ENCODE measurements at regions of chr11 and their contacts with region 1.

Region 1: DNA sequence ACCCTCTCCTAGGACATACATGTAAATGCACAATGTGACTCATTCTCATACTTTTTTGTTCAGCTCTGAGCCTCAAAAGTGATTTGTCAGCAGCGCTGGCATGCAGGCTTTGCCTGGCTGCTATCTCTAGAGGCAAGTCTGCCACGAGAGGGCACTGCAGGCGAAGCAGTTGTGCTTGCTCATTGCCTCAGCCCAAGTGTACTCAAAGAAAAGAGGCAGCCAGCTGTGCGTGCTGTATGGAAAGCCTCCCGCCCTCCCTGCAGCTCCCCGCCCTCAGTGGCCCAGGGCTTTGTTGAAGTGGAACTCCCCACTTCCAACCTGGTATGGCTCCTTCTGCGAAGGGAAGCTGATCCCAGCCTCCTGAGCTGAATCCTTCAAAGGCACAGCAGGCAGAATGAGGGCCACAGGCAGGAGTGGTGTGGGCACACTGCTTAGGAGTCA is 16.3 kb downstream of the SDHAF2 start:
- DNase-seq: peak; percentile 95
- ATAC-seq: peak; percentile 93
- H3K4me3 Mint-ChIP-seq: no peak overlapping the region
- H3K27ac Mint-ChIP-seq: peak overlapping the region; percentile 82; the same call in 1 of the 2 replicates
- H3K4me1 Mint-ChIP-seq: no peaks in the 10 kb centered on the region
- H3K27me3 Mint-ChIP-seq: no peaks in the 10 kb centered on the region
- CTCF ChIP-seq: peak; percentile 47

Region 2: GRCh38 chr11:61028272-61028761 is 417.9 kb before region 1 on chr11:
- CTCF ChIA-PET with region 1: no interaction called
- POLR2A ChIA-PET with region 1: no interaction called
- DNase-seq: no peak
- ATAC-seq: no peak
- H3K4me3 Mint-ChIP-seq: no peak overlapping the region
- H3K27ac Mint-ChIP-seq: no peak overlapping the region
- H3K4me1 Mint-ChIP-seq: peaks cover 16% of the 10 kb centered on the region
- H3K27me3 Mint-ChIP-seq: peaks cover 13% of the 10 kb centered on the region; the same call in 1 of the 2 replicates
- CTCF ChIP-seq: no peak

Region 3: DNA sequence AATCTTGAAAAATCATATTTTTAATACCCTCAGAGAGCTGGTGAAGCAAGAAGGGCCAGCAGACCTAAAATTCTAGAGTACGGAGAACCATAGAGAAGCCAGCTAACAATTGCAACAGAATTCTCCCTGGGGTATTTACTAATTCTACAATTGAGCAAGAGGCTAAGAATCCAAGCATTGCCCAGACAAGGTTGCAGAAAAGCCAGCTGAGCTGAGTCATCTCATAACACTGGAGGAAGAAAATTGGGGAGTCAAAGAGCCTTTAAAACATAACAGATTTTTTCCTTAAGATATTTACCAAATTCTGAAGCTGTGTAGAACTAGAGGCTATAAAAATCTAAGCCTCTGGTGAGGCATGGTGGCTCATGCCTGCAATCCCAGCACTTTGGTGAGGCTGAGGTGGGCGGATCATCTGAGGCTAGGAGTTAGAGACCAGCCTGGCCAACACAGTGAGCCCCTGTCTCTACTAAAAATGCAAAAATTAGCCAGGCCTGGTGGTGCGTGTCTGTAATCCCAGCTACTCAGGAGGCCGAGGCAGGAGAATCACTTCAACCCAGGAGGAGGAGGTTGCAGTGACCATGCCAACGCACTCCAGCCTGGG is 67.4 kb before region 1 on chr11:
- CTCF ChIA-PET with region 1: no interaction called
- POLR2A ChIA-PET with region 1: no interaction called
- DNase-seq: no peak
- ATAC-seq: no peak
- H3K4me3 Mint-ChIP-seq: no peak overlapping the region
- H3K27ac Mint-ChIP-seq: no peak overlapping the region
- H3K4me1 Mint-ChIP-seq: 0 out of 2 replicates have a peak, but pooled peaks cover 3% of the 10 kb centered on the region
- H3K27me3 Mint-ChIP-seq: no peaks in the 10 kb centered on the region
- CTCF ChIP-seq: no peak

Region 4: DNA sequence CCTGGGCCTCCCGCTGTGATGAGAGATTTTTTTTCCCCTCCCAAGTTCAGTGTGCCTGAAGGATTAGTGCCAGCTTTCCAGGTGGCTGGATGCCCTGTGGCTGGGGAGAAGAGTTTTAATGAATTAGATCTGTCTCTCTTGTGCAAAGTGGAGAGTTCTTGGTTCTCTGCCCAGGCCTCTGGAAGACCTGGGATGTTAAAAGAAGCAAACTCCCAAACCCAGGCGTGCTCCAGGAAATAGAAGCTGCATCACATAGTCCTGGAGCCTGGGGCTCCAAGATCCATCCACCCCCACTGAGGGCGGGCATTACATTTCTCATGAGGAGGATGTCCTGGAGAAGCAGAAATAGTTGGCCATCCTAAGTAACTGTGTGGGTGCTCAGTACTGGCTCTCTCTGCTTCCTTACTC is 14.2 kb after region 1 on chr11:
- CTCF ChIA-PET with region 1: interaction called, 26 read pairs
- POLR2A ChIA-PET with region 1: no interaction called
- DNase-seq: no peak
- ATAC-seq: no peak
- H3K4me3 Mint-ChIP-seq: no peak overlapping the region
- H3K27ac Mint-ChIP-seq: 0 out of 2 replicates have a peak overlapping the region, but pooled peaks have one; percentile 21
- H3K4me1 Mint-ChIP-seq: peaks cover 2% of the 10 kb centered on the region; the same call in 1 of the 2 replicates
- H3K27me3 Mint-ChIP-seq: no peaks in the 10 kb centered on the region
- CTCF ChIP-seq: no peak

Region 5: GRCh38 chr11:61495801-61496597 is 49.8 kb after region 1 on chr11:
- CTCF ChIA-PET with region 1: interaction called, 17 read pairs
- POLR2A ChIA-PET with region 1: no interaction called
- DNase-seq: no peak
- ATAC-seq: no peak
- H3K4me3 Mint-ChIP-seq: no peak overlapping the region
- H3K27ac Mint-ChIP-seq: no peak overlapping the region
- H3K4me1 Mint-ChIP-seq: peaks cover 20% of the 10 kb centered on the region
- H3K27me3 Mint-ChIP-seq: no peaks in the 10 kb centered on the region
- CTCF ChIP-seq: no peak

Region 6: DNA sequence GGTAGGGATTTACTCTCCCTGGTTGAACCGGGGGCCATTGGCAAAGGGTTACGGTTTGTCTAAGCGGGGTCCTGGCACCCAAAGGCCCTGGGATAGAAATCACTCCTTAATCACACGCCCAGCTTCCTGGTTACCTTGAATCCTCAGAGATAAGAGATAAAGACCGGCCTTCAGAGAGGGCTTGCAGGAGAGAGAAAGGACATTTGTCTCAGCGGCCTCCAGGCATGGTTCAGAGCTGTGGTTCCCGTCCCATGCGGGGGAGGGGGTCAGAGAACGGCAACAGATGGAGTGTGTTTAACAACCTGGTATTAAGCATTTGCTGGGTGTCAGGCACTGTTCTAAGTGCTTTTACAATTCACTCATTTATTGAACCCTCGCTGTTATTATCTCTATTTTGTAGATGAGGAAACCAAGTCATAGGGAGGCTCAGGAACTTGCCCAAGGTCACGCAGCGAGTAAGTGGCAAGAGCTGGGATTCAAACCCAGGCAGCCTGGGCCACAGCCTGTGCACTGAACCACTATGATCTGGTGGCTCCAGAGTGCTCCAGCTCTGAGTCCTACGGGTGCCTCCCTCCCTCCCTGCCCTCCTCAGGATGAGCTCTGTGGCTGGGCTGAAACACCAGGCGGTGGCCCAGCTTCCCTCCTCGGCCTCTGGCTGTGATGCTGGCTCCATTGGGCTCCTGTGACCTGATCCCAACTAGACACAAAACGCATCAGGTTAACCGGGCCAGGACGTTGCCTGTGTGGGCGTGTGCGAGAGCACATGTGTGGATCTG is 80.9 kb after region 1 on chr11:
- CTCF ChIA-PET with region 1: interaction called, 34 read pairs
- POLR2A ChIA-PET with region 1: no interaction called
- DNase-seq: no peak
- ATAC-seq: no peak
- H3K4me3 Mint-ChIP-seq: no peak overlapping the region
- H3K27ac Mint-ChIP-seq: peak overlapping the region; percentile 90; the same call in 1 of the 2 replicates
- H3K4me1 Mint-ChIP-seq: peaks cover 10% of the 10 kb centered on the region
- H3K27me3 Mint-ChIP-seq: no peaks in the 10 kb centered on the region
- CTCF ChIP-seq: no peak

Region 7: GRCh38 chr11:61627567-61628445 is 181.6 kb after region 1 on chr11:
- CTCF ChIA-PET with region 1: interaction called, 16 read pairs
- POLR2A ChIA-PET with region 1: no interaction called
- DNase-seq: peak; percentile 87
- ATAC-seq: peak; percentile 79
- H3K4me3 Mint-ChIP-seq: no peak overlapping the region
- H3K27ac Mint-ChIP-seq: peak overlapping the region; percentile 70
- H3K4me1 Mint-ChIP-seq: peaks cover 50% of the 10 kb centered on the region
- H3K27me3 Mint-ChIP-seq: no peaks in the 10 kb centered on the region
- CTCF ChIP-seq: peak; percentile 92